ENCODE measurements at regions of chr4 and their contacts with region 1.

Region 1: GRCh38 chr4:86522349-86522748 is 71.8 kb upstream of the PTPN13 start:
- DNase-seq: no peak
- ATAC-seq: no peak
- H3K4me3 ChIP-seq: no peak overlapping the region
- H3K4me3 Mint-ChIP-seq: no peak overlapping the region
- H3K27ac ChIP-seq: no peak overlapping the region
- H3K27ac Mint-ChIP-seq: no peak overlapping the region
- H3K4me1 ChIP-seq: no peaks in the 10 kb centered on the region
- H3K4me1 Mint-ChIP-seq: no peaks in the 10 kb centered on the region
- H3K27me3 ChIP-seq: no peaks in the 10 kb centered on the region
- H3K27me3 Mint-ChIP-seq: peaks cover 2% of the 10 kb centered on the region
- CTCF ChIP-seq: no peak

Region 2: DNA sequence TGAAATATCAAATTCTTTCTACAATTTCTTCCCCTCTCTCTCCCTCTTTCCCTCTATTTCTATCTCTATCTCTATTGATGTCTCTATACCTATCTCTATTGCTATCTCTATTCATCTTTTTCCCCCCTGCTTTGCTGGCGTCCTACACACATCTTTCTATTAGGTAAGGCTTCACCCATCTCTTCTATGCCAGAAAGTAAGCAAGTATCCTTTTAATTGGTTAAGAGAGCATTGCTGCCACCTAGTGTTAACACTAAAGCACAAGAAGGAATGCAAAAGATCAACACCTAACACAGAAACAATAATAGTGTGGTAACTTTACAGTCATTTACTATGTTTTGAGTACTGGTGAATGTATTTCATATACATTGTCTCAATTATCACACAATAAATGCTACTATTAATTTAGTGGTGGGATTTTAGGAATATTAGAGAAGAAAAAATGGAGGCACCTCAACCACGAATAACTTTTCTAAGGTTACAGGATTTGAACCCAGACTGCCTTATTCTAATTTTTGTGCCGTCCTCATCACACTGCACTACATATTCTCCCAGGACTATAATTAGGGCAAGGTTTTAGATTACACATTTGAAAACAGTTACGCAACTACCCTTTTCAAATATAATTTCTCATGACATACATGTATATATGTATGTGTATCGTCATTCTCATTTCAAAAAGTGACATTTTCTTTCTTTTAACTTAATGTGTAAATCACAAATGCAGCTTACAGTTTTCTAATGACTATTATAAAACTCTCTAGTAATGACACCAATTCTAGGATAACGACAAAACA is 373.5 kb after region 1 on chr4:
- CTCF ChIA-PET with region 1: no interaction called
- POLR2A ChIA-PET with region 1: no interaction called
- intact Hi-C with region 1: loop called in 1 of 2 experiments (anchors 5 kb)
- DNase-seq: peak in 3 of 9 experiments; percentile 7 to 59 (median 49)
- ATAC-seq: peak; percentile 56
- H3K4me3 ChIP-seq: no peak overlapping the region
- H3K4me3 Mint-ChIP-seq: no peak overlapping the region
- H3K27ac ChIP-seq: no peak overlapping the region
- H3K27ac Mint-ChIP-seq: no peak overlapping the region
- H3K4me1 ChIP-seq: peaks cover 3% of the 10 kb centered on the region
- H3K4me1 Mint-ChIP-seq: peaks cover 12% of the 10 kb centered on the region
- H3K27me3 ChIP-seq: peaks cover 5 to 9% of the 10 kb centered on the region in 2 experiments
- H3K27me3 Mint-ChIP-seq: peaks cover 17% of the 10 kb centered on the region
- CTCF ChIP-seq: peak; percentile 74

Measured in CD8-positive, alpha-beta T cell (primary cell).